ENCODE measurements at regions of chr5 and their contacts with region 1.

Region 1: GRCh38 chr5:168987543-168988300 is 313.2 kb downstream of the SLIT3 start:
- DNase-seq: peak; percentile 75
- H3K4me3 ChIP-seq: no peak overlapping the region
- H3K27ac ChIP-seq: no peak overlapping the region
- H3K4me1 ChIP-seq: peaks cover 12% of the 10 kb centered on the region
- H3K27me3 ChIP-seq: no peaks in the 10 kb centered on the region

Region 2: GRCh38 chr5:169302491-169303118 is 314.9 kb after region 1 on chr5:
- in situ Hi-C with region 1: loop called (anchors 10 kb)
- DNase-seq: peak; percentile 85
- H3K4me3 ChIP-seq: peak overlapping the region; percentile 50
- H3K27ac ChIP-seq: peak overlapping the region; percentile 34
- H3K4me1 ChIP-seq: peaks cover 38% of the 10 kb centered on the region
- H3K27me3 ChIP-seq: no peaks in the 10 kb centered on the region